Ascending aorta (tissue), 2 donors: ENCODE measurements at regions of chr5 and their contacts with region 1.

Region 1: DNA sequence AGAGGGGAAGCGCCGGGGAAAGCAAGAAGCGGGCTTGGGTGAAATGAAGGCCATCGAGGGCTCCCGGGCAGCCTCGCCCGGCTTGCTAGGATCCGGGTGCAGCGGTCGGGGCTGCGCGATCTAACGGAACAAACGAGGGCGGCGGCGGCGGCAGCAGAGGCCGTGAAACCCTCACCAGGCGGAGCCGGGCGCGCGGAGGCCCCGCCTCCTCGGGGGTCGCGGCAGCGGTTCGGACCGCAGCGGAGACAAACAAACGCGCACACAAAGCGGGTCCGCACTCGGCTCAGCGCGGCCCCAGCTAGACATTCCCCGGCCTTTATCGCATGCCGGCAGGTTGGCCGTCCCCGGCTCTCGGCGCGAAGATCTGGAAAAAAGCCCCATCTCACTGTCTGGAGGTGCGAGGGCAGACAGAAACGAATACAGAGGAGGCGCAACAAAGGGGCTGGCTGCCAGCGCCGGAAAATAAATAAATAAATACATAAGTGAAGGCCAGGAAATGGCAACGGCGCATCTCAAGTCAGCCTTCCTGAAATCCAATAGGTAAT is 10.5 kb upstream of the TRIM36 start:
- DNase-seq: no peak
- H3K4me3 ChIP-seq: peak overlapping the region; percentile 66 to 80
- H3K27ac ChIP-seq: peak overlapping the region; percentile 63 to 68
- H3K4me1 ChIP-seq: no peaks in the 10 kb centered on the region
- H3K27me3 ChIP-seq: no peaks in the 10 kb centered on the region
- CTCF ChIP-seq: no peak

Region 2: DNA sequence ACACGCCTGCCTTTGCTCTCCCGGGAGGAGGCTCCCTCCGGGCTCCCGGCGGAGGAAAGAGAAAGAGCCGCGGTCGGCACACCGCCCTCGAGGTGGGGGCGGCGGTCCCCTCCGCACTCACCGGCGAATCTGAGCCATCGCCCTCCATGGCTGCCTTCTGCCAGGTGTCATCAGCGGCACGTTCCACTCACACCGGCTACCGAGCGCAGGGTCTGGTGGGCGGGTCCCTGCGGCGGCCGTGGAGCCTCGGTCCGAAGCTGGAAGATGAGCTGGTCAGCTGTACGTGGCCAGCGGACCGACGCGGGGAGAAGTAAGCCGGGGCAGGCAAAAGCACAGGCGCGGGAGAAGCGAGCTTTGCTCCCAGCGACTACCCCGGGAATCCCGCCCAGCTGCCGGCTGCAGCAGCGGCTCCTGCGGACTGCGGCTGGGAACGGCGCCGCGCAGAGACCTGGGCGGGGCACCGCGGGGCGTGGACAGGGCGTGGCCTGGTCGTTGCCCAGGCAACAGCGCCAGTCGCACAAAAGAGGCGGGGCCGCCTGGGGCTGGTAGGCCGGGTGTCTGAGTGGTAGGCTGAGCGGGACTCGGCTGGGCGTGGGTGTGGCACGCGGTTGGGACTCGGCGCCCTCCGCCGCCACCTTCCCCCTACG is 10.6 kb before region 1 on chr5 and contains the start of gene TRIM36:
- intact Hi-C with region 1: loop called (anchors 1 kb)
- DNase-seq: peak; percentile 79 to 94
- H3K4me3 ChIP-seq: peak within 1 kb of the TSS; percentile 83 to 90
- H3K27ac ChIP-seq: peak within 1 kb of the TSS; percentile 65 to 69
- H3K4me1 ChIP-seq: peaks cover 4 to 6% of the 10 kb centered on the region in 2 donors
- H3K27me3 ChIP-seq: no peaks in the 10 kb centered on the region
- CTCF ChIP-seq: peak in 2 of 3 experiments; percentile 28 to 33
- total RNA-seq, gene TRIM36: 31.7 TPM

Region 3: GRCh38 chr5:115214541-115214940 is 34.3 kb after region 1 on chr5:
- intact Hi-C with region 1: loop called (anchors 5 kb)
- DNase-seq: no peak
- H3K4me3 ChIP-seq: no peak overlapping the region
- H3K27ac ChIP-seq: peak overlapping the region; percentile 59 to 64
- H3K4me1 ChIP-seq: peaks cover 0 to 21% of the 10 kb centered on the region in 2 donors
- H3K27me3 ChIP-seq: no peaks in the 10 kb centered on the region
- CTCF ChIP-seq: no peak

Region 4: GRCh38 chr5:115229606-115230005 is 49.4 kb after region 1 on chr5:
- intact Hi-C with region 1: no loop called
- DNase-seq: no peak
- H3K4me3 ChIP-seq: no peak overlapping the region
- H3K27ac ChIP-seq: no peak overlapping the region
- H3K4me1 ChIP-seq: no peaks in the 10 kb centered on the region
- H3K27me3 ChIP-seq: no peaks in the 10 kb centered on the region
- CTCF ChIP-seq: no peak